ENCODE measurements at regions of chr7 and their contacts with region 1.

Region 1: GRCh38 chr7:78510580-78511188 is 712.1 kb downstream of the PHTF2 start:
- DNase-seq: peak in 1 of 2 donors; percentile 6
- ATAC-seq: peak in 1 of 8 donors; percentile 29
- H3K4me3 ChIP-seq: no peak overlapping the region
- H3K27ac ChIP-seq: no peak overlapping the region
- H3K4me1 ChIP-seq: no peaks in the 10 kb centered on the region
- H3K27me3 ChIP-seq: no peaks in the 10 kb centered on the region
- CTCF ChIP-seq: peak in 8 of 9 donors; percentile 5 to 67 (median 52)

Region 2: GRCh38 chr7:78350926-78351325 is 159.8 kb before region 1 on chr7:
- intact Hi-C with region 1: no loop called
- DNase-seq: no peak
- ATAC-seq: no peak
- H3K4me3 ChIP-seq: no peak overlapping the region
- H3K27ac ChIP-seq: no peak overlapping the region
- H3K4me1 ChIP-seq: peaks cover 0 to 8% (median 4%) of the 10 kb centered on the region in 9 donors
- H3K27me3 ChIP-seq: no peaks in the 10 kb centered on the region
- CTCF ChIP-seq: no peak

Region 3: DNA sequence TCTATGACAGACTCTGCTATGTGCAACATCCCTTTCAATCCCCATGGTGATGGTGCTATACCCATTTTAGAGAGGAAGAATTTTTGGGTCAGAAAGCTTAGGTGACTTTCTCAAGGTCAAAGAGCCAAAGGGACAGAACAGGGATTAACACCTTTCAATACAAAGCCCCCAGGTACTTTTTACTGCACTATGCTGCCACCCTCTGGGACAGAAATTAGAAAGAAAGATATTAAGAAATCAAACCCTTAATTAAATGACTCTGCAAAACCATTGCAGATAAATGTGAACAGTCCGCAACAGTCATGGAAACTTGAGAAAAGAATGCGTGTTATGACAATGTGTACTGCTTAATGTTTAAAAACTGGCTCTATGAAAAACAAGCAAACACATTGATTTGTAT is 269.1 kb after region 1 on chr7:
- intact Hi-C with region 1: loop called in 1 of 10 experiments (anchors 2 kb)
- DNase-seq: no peak
- ATAC-seq: no peak
- H3K4me3 ChIP-seq: no peak overlapping the region
- H3K27ac ChIP-seq: no peak overlapping the region
- H3K4me1 ChIP-seq: no peaks in the 10 kb centered on the region
- H3K27me3 ChIP-seq: no peaks in the 10 kb centered on the region
- CTCF ChIP-seq: peak in 1 of 9 donors; percentile 7

Region 4: DNA sequence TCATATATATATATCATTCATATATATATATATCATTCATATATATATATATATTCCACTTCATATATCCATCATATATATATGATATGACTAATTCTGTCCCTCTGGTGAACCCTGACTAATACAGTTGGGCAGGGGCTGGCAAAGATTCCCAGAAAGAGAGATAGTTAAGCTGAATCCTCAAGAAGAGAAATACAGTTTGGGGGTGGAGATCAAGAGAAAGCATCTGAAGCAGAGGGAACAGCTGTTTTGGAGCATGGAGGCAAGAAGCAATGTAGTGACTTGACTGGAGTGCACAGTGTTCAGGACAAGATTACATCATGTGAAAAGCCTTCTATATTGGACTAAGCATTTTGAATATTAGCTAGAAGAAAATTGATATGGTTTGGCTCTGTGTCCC is 402.1 kb after region 1 on chr7:
- intact Hi-C with region 1: loop called in 1 of 10 experiments (anchors 10 kb)
- DNase-seq: no peak
- ATAC-seq: no peak
- H3K4me3 ChIP-seq: no peak overlapping the region
- H3K27ac ChIP-seq: no peak overlapping the region
- H3K4me1 ChIP-seq: no peaks in the 10 kb centered on the region
- H3K27me3 ChIP-seq: no peaks in the 10 kb centered on the region
- CTCF ChIP-seq: no peak

Measured in heart right ventricle (tissue), 16 donors.